OCI-LY7 (cell line): ENCODE measurements at regions of chr6 and their contacts with region 1.

Region 1: GRCh38 chr6:31619805-31620585 is 520 bp upstream of the PRRC2A start:
- DNase-seq: peak; percentile 99
- H3K4me3 ChIP-seq: peak overlapping the region; percentile 83
- H3K27ac ChIP-seq: peak overlapping the region; percentile 94
- H3K4me1 ChIP-seq: peaks cover 42% of the 10 kb centered on the region
- CTCF ChIP-seq: no peak

Region 2: GRCh38 chr6:31485055-31485454 is 134.9 kb before region 1 on chr6:
- CTCF ChIA-PET with region 1: no interaction called
- POLR2A ChIA-PET with region 1: no interaction called
- intact Hi-C with region 1: no loop called
- DNase-seq: no peak
- H3K4me3 ChIP-seq: no peak overlapping the region
- H3K27ac ChIP-seq: no peak overlapping the region
- H3K4me1 ChIP-seq: peaks cover 8% of the 10 kb centered on the region
- CTCF ChIP-seq: no peak

Region 3: GRCh38 chr6:31652925-31653718 is 33.1 kb after region 1 on chr6:
- CTCF ChIA-PET with region 1: no interaction called
- POLR2A ChIA-PET with region 1: interaction called, 4 read pairs
- intact Hi-C with region 1: loop called (anchors 1 kb)
- DNase-seq: peak; percentile 97
- H3K4me3 ChIP-seq: peak overlapping the region; percentile 76
- H3K27ac ChIP-seq: peak overlapping the region; percentile 75
- H3K4me1 ChIP-seq: peaks cover 19% of the 10 kb centered on the region
- CTCF ChIP-seq: peak; percentile 59

Region 4: GRCh38 chr6:31785475-31785874 is 165.5 kb after region 1 on chr6:
- CTCF ChIA-PET with region 1: no interaction called
- POLR2A ChIA-PET with region 1: no interaction called
- intact Hi-C with region 1: loop called (anchors 5 kb)
- DNase-seq: no peak
- H3K4me3 ChIP-seq: no peak overlapping the region
- H3K27ac ChIP-seq: no peak overlapping the region
- H3K4me1 ChIP-seq: peaks cover 25% of the 10 kb centered on the region
- CTCF ChIP-seq: no peak